ENCODE measurements at regions of chr9 and their contacts with region 1.

Region 1: GRCh38 chr9:75088260-75088905 is at the start of gene OSTF1:
- DNase-seq: peak; percentile 80 to 99 (median 96)

Region 2: GRCh38 chr9:75027187-75028107 is 60.9 kb before region 1 on chr9:
- intact Hi-C with region 1: loop called (anchors 5 kb)
- DNase-seq: peak in 40 of 42 donors; percentile 32 to 81 (median 59)

Region 3: DNA sequence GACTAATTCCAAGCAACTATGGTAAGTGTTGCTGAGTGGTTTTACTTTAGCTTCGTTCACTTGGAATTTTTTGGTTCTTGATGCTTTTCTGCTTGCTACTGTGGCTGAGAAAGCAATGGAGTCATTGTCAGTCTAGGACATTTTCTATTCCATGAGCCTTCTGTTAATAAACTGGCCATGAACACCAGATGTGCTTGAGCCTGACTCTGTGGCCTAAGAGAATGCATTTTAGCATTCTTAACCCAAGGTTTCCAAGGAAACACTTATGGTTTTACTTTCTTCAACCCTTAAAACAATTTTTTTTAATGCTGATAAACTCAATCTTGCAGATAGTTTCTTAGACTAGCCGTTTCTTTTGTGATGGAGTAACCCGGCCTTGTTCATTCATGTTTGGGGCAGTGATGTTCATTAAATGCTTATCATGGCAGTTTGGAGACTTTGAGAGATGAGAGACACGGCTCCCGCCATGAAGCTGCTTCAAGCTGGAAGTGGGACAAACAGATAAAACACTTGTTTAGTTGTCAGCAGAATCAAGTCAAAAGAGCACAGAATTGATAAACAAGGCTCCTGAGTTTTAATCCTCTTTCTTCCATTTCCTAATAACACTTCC is 42.3 kb after region 1 on chr9:
- intact Hi-C with region 1: loop called (anchors 10 kb)
- DNase-seq: no peak

Region 4: GRCh38 chr9:75185585-75186170 is 97.3 kb after region 1 on chr9:
- intact Hi-C with region 1: loop called (anchors 5 kb)
- DNase-seq: peak in 36 of 42 donors; percentile 10 to 71 (median 38)

Region 5: GRCh38 chr9:75282047-75282446 is 193.7 kb after region 1 on chr9:
- intact Hi-C with region 1: no loop called
- DNase-seq: no peak

Measured in head of caudate nucleus (tissue), 42 donors.